ENCODE measurements at regions of chr13 and their contacts with region 1.

Region 1: DNA sequence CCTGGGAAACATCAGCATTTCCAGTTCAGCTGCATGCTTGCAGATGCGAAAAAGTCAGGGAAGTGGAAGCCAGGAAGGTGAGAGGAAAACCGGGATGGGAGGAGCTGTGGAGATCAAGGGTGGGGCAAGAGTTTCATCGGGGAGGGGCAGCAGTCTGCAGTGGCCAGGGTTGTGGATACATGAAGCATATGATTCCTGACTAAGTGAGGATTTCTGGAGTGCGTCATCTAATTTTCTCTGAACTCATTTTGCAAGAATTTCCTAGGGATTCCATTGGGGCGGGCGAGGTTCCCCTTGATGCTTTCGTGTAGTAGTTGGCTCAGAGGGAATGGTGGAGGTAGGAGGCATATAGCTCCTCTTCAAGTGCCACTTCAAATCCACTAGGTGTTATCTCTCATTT is 344.1 kb upstream of the TMTC4 start:
- DNase-seq: peak; percentile 73
- H3K4me3 ChIP-seq: no peak overlapping the region
- H3K27ac ChIP-seq: no peak overlapping the region
- H3K4me1 ChIP-seq: no peaks in the 10 kb centered on the region
- H3K27me3 ChIP-seq: no peaks in the 10 kb centered on the region
- CTCF ChIP-seq: no peak

Region 2: GRCh38 chr13:100854021-100854420 is 164.7 kb before region 1 on chr13:
- CTCF ChIA-PET with region 1: no interaction called
- dilution Hi-C with region 1: no loop called
- in situ Hi-C with region 1: no loop called
- intact Hi-C with region 1: no loop called
- DNase-seq: no peak
- H3K4me3 ChIP-seq: no peak overlapping the region
- H3K27ac ChIP-seq: no peak overlapping the region
- H3K4me1 ChIP-seq: no peaks in the 10 kb centered on the region
- H3K27me3 ChIP-seq: no peaks in the 10 kb centered on the region
- CTCF ChIP-seq: no peak

Region 3: DNA sequence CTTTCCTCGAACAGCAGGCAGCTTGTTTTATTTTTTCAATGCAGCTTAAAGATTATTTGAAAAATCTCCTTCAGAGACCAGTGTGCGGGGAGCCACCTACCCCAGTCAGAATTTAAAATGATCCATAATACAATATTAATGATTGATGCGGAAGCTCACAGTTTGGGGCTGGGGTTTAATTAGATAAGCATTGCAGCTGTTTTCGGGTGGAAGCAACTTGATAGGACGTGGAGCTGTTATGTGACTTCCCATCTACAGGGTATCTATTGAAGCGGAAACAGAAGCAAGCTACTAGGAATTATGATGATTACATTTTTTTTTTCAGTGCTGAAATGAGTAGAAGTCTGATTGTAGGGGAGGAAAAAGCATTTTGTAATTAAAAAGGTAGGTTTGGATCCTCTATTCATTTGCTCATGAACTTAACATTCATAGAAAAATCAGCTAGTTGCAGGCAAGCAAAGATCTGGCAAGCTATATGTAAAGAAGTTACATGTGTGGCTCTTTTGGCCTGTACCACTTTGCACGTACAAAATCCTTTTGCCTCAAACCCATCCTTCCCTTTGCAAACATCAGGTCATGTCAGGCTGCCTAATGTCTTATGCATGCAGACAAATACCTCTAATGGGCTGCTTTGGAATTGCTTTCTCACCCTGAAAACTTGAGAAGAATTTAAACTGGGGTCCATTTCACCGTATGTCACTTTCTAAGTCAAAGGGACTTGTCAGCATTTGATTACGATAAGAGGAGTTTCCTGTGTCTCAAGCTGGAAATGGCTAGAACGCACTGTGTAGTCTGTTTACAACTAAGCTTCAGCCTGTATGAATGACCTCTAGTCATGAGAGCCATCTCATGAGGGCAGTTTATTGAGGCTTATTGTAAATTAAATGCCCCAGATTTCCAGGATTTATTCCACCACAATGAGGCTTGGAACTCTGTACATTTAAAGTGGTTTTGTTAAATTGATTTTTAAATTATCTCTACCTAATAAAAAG is 77.0 kb before region 1 on chr13:
- CTCF ChIA-PET with region 1: interaction called, 7 read pairs
- dilution Hi-C with region 1: no loop called
- in situ Hi-C with region 1: no loop called
- intact Hi-C with region 1: loop called (anchors 2 kb)
- DNase-seq: no peak
- H3K4me3 ChIP-seq: no peak overlapping the region
- H3K27ac ChIP-seq: no peak overlapping the region
- H3K4me1 ChIP-seq: no peaks in the 10 kb centered on the region
- H3K27me3 ChIP-seq: no peaks in the 10 kb centered on the region
- CTCF ChIP-seq: no peak

Region 4: GRCh38 chr13:101049166-101049850 is 30.6 kb after region 1 on chr13:
- CTCF ChIA-PET with region 1: no interaction called
- dilution Hi-C with region 1: no loop called
- in situ Hi-C with region 1: no loop called
- intact Hi-C with region 1: loop called (anchors 1 kb)
- DNase-seq: peak; percentile 64
- H3K4me3 ChIP-seq: no peak overlapping the region
- H3K27ac ChIP-seq: peak overlapping the region; percentile 59
- H3K4me1 ChIP-seq: peaks cover 3% of the 10 kb centered on the region
- H3K27me3 ChIP-seq: no peaks in the 10 kb centered on the region
- CTCF ChIP-seq: no peak

Region 5: GRCh38 chr13:101115762-101116171 is 97.0 kb after region 1 on chr13:
- CTCF ChIA-PET with region 1: no interaction called
- dilution Hi-C with region 1: no loop called
- in situ Hi-C with region 1: loop called in 1 of 2 experiments (anchors 25 kb)
- intact Hi-C with region 1: no loop called
- DNase-seq: peak; percentile 12
- H3K4me3 ChIP-seq: no peak overlapping the region
- H3K27ac ChIP-seq: no peak overlapping the region
- H3K4me1 ChIP-seq: no peaks in the 10 kb centered on the region
- H3K27me3 ChIP-seq: no peaks in the 10 kb centered on the region
- CTCF ChIP-seq: peak in 1 of 2 donors; percentile 35

Region 6: DNA sequence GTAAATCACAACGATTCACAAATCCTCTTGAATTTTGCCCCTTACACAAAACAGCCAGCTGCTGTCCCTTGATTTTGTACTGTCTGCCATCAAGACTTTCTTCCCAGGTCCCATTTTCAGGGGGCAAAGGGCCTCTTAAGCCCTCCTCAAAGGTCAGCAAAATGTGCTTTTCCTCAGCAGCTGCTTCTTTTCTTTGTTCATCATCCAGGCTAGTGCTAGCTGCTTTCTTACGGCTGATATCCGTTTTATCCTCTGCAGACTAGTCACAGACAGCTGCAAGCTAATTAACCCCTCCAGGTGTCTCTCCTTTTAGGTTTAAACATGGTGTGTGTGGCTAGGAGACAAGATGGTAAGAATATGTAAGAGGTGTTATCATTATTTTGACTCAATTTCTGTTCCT is 306.7 kb after region 1 on chr13:
- CTCF ChIA-PET with region 1: no interaction called
- dilution Hi-C with region 1: no loop called
- in situ Hi-C with region 1: no loop called
- intact Hi-C with region 1: no loop called
- DNase-seq: no peak
- H3K4me3 ChIP-seq: no peak overlapping the region
- H3K27ac ChIP-seq: no peak overlapping the region
- H3K4me1 ChIP-seq: no peaks in the 10 kb centered on the region
- H3K27me3 ChIP-seq: no peaks in the 10 kb centered on the region
- CTCF ChIP-seq: no peak